Tibial artery (tissue), 4 donors: ENCODE measurements at regions of chr19 and their contacts with region 1.

Region 1: GRCh38 chr19:45994989-45995714 is at the start of gene CCDC61:
- DNase-seq: peak; percentile 95 to 98
- H3K4me3 ChIP-seq: peak within 1 kb of the TSS; percentile 74 to 85
- H3K27ac ChIP-seq: peak within 1 kb of the TSS; percentile 76 to 82
- H3K4me1 ChIP-seq: peaks cover 0 to 22% (median 11%) of the 10 kb centered on the region in 4 donors
- H3K27me3 ChIP-seq: peaks cover 0 to 27% of the 10 kb centered on the region in 2 donors
- CTCF ChIP-seq: peak in 1 of 2 experiments; percentile 10

Region 2: GRCh38 chr19:45927565-45928261 is 67.4 kb before region 1 on chr19:
- intact Hi-C with region 1: loop called (anchors 10 kb)
- DNase-seq: peak; percentile 90 to 91
- H3K4me3 ChIP-seq: no peak overlapping the region
- H3K27ac ChIP-seq: no peak overlapping the region
- H3K4me1 ChIP-seq: peaks cover 0 to 4% (median 2%) of the 10 kb centered on the region in 4 donors
- H3K27me3 ChIP-seq: peaks cover 0 to 5% of the 10 kb centered on the region in 2 donors
- CTCF ChIP-seq: no peak